Naive thymus-derived CD4-positive, alpha-beta T cell (primary cell): ENCODE measurements at regions of chr12 and their contacts with region 1.

Region 1: GRCh38 chr12:91935296-91935695 is 210.3 kb downstream of the BTG1 start:
- DNase-seq: no peak
- ATAC-seq: no peak
- H3K4me3 ChIP-seq: no peak overlapping the region
- H3K4me3 Mint-ChIP-seq: peak overlapping the region in 1 of 10 donors; percentile 21
- H3K27ac ChIP-seq: no peak overlapping the region
- H3K27ac Mint-ChIP-seq: peak overlapping the region in 2 of 9 donors; percentile 9 to 69
- H3K4me1 ChIP-seq: no peaks in the 10 kb centered on the region
- H3K4me1 Mint-ChIP-seq: peaks cover 0 to 49% (median 23%) of the 10 kb centered on the region in 7 donors
- H3K27me3 ChIP-seq: no peaks in the 10 kb centered on the region
- H3K27me3 Mint-ChIP-seq: no peaks in the 10 kb centered on the region

Region 2: GRCh38 chr12:91890742-91891141 is 44.6 kb before region 1 on chr12:
- CTCF ChIA-PET with region 1: no interaction called
- POLR2A ChIA-PET with region 1: no interaction called
- intact Hi-C with region 1: loop called in 1 of 2 experiments (anchors 5 kb)
- DNase-seq: no peak
- ATAC-seq: no peak
- H3K4me3 ChIP-seq: no peak overlapping the region
- H3K4me3 Mint-ChIP-seq: no peak overlapping the region
- H3K27ac ChIP-seq: no peak overlapping the region
- H3K27ac Mint-ChIP-seq: no peak overlapping the region
- H3K4me1 ChIP-seq: no peaks in the 10 kb centered on the region
- H3K4me1 Mint-ChIP-seq: peaks cover 0 to 18% (median 13%) of the 10 kb centered on the region in 7 donors
- H3K27me3 ChIP-seq: no peaks in the 10 kb centered on the region
- H3K27me3 Mint-ChIP-seq: peaks cover 0 to 3% (median 0%) of the 10 kb centered on the region in 5 donors

Region 3: DNA sequence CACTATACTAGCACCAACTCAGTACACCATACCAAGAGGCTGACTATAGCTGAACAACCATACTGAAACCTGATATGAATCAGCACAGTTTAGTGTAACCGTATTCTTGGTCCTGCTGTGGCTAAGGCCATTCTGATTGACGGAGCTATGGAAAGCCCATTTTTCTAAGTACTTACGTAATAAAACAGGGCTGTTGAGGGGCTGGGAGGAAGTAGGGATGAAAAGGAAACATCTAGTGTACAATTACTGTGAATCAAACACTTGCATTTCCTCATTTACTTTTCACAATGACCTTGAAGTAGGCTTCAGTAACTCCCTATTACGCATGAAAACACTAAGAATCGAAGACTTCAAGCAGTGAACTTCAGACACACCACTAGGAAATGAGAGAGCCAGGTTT is 12.2 kb after region 1 on chr12:
- CTCF ChIA-PET with region 1: no interaction called
- POLR2A ChIA-PET with region 1: interaction called, 3 read pairs
- intact Hi-C with region 1: loop called in 1 of 2 experiments (anchors 1 kb)
- DNase-seq: peak in 1 of 9 donors; percentile 25
- ATAC-seq: peak; percentile 53
- H3K4me3 ChIP-seq: no peak overlapping the region
- H3K4me3 Mint-ChIP-seq: no peak overlapping the region
- H3K27ac ChIP-seq: no peak overlapping the region
- H3K27ac Mint-ChIP-seq: peak overlapping the region in 3 of 9 donors; percentile 26 to 66 (median 26)
- H3K4me1 ChIP-seq: peaks cover 3 to 4% of the 10 kb centered on the region in 2 donors
- H3K4me1 Mint-ChIP-seq: peaks cover 5 to 35% (median 14%) of the 10 kb centered on the region in 7 donors
- H3K27me3 ChIP-seq: no peaks in the 10 kb centered on the region
- H3K27me3 Mint-ChIP-seq: peaks cover 0 to 3% (median 0%) of the 10 kb centered on the region in 5 donors

Region 4: GRCh38 chr12:92158796-92159439 is 223.6 kb after region 1 on chr12:
- CTCF ChIA-PET with region 1: no interaction called
- POLR2A ChIA-PET with region 1: no interaction called
- intact Hi-C with region 1: no loop called
- DNase-seq: peak in 4 of 9 donors; percentile 32 to 58 (median 48)
- ATAC-seq: peak; percentile 84
- H3K4me3 ChIP-seq: peak overlapping the region; percentile 15
- H3K4me3 Mint-ChIP-seq: peak overlapping the region; percentile 49 to 87 (median 76)
- H3K27ac ChIP-seq: peak overlapping the region; percentile 70
- H3K27ac Mint-ChIP-seq: peak overlapping the region; percentile 65 to 99 (median 95)
- H3K4me1 ChIP-seq: peaks cover 0 to 46% of the 10 kb centered on the region in 2 donors
- H3K4me1 Mint-ChIP-seq: peaks cover 28 to 92% (median 78%) of the 10 kb centered on the region in 7 donors
- H3K27me3 ChIP-seq: no peaks in the 10 kb centered on the region
- H3K27me3 Mint-ChIP-seq: no peaks in the 10 kb centered on the region